Activated CD8-positive, alpha-beta T cell treated with anti-CD3 and anti-CD28 coated beads, Interleukin-2, amount 10 ng/mL, durations not matched to agents 7 days and 5 days (primary cell): ENCODE measurements at regions of chr9 and their contacts with region 1.

Region 1: DNA sequence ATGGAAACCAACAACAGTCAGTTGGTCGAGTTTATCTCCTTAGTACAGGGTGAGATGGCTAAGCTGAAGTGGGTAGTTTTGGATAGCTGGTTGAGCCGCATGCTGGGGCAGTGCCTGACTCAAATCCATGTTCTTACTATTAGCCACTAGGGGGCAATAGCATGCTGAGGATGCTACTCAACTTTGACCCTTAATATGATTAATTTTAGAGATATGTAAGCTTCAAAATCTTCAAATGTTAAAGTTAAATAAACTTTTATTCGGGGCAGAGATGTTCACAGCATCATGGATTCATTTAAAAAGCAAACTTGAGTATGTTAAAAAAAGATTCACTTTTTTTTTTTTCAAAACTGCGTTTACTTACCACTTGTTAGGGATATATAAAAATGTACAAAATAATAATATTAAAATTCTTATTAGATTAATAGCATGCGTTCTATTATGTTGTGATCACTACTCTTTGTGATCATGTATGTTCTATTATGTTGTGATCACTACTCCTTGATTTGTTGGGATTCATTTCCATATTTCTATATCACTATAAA is 57.0 kb downstream of the C9orf153 start:
- DNase-seq: peak; percentile 40
- ATAC-seq: peak; percentile 74
- H3K4me3 Mint-ChIP-seq: no peak overlapping the region
- H3K27ac Mint-ChIP-seq: no peak overlapping the region
- H3K4me1 Mint-ChIP-seq: peaks cover 4% of the 10 kb centered on the region
- H3K27me3 Mint-ChIP-seq: peaks cover 9% of the 10 kb centered on the region

Region 2: DNA sequence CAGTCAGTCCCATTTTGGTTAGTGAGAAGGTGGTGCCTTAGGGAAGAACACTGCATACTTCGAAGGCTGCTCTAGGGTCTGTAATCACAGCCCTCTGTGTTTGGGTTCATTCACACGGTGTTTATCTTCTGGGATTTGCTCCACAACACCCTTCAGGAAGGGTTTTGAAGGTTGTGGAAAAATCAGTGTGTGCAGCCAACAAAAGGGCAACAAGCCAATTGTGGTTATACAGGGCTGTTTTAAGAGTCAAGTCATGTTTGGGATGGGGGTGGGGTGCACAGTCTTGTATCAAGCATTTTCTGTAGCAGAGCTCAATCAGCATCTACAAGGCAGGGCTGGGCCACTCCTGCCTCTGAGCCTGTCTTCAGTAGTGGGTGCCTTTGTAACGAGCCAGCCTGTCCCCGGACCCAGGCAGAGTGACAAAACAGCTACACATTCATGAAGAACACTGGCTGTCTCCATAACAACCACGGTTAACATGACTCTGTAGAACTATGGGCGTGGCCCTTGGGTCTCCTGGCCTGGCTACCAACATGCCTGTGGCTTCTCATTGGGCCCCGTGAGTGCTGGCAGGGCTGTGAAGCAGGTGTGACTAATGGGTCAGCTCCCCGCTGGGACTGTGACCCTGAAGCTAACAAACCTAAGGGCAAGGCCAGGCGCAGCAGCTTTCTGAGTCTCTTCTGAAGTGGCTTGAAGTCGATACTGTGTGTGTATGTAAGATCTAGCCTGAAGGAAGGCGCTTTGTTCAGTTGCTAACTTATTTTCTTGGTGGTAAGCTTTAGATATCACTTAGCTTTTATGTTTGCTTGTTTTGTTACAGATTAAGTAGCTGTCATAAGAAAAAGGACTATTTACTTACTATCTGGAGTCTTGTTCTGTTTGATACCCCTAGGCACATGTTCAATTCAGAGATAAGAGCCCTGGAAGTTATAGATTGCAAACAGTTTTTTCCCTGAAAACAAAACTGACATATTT is 75.1 kb before region 1 on chr9:
- CTCF ChIA-PET with region 1: no interaction called
- POLR2A ChIA-PET with region 1: no interaction called
- DNase-seq: no peak
- ATAC-seq: no peak
- H3K4me3 Mint-ChIP-seq: no peak overlapping the region
- H3K27ac Mint-ChIP-seq: no peak overlapping the region
- H3K4me1 Mint-ChIP-seq: no peaks in the 10 kb centered on the region
- H3K27me3 Mint-ChIP-seq: no peaks in the 10 kb centered on the region

Region 3: DNA sequence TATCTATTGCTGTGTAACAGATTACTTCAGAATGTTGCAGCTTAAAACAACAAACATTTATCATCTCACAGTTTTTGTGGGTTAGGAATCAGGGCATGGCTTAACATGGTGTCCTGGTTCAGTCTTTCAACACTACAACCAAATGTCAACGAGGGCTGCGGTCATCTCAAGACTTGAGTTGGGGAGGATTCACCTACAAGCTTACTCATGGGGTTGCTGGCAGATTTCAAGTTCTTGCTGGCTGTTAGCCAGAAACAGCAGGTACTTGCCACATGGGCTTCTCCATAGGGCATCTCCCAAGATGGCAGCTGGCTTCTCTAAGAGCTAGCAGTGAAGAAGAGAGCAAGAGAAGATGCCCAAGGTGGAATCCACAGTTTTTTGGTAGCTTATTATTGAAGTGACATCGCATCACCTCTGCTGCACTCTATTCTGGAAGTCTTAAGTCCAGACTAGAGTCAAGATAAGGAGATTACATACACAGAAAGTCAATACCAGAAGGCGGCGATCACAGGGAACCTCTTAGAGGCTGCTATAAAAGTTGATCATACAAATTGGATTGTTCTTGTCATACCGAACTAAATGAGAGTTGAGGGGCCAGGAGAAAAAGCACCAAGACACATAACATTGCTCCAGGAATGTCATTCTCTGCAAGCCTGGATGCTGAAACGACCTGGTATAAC is 14.8 kb after region 1 on chr9:
- CTCF ChIA-PET with region 1: interaction called, 10 read pairs
- POLR2A ChIA-PET with region 1: no interaction called
- DNase-seq: no peak
- ATAC-seq: no peak
- H3K4me3 Mint-ChIP-seq: no peak overlapping the region
- H3K27ac Mint-ChIP-seq: no peak overlapping the region
- H3K4me1 Mint-ChIP-seq: no peaks in the 10 kb centered on the region
- H3K27me3 Mint-ChIP-seq: no peaks in the 10 kb centered on the region